Mammary epithelial cell (primary cell): ENCODE measurements at regions of chr15 and their contacts with region 1.

Region 1: DNA sequence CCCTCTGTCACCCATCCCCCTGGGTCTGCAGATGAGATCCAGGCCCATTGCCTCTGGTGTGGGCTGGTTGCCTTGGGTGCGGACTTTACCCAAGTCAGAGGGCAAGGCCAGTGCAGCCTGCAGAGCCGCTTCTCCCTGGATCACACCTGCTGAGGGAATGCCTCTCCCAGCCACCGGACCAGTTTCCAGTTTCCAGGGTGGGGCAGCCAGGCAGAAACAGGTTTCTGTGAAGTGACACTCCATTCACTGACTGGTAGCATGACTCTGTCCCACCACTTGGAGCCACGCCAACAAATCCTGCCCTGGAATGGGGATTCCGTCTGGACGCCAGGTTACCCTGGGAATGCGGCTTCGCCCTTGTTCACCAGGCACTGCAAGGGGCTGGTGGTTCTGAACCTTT is 30.0 kb downstream of the PAQR5 start:
- DNase-seq: no peak
- H3K4me3 ChIP-seq: no peak overlapping the region
- H3K27ac ChIP-seq: no peak overlapping the region
- H3K4me1 ChIP-seq: no peaks in the 10 kb centered on the region
- H3K27me3 ChIP-seq: no peaks in the 10 kb centered on the region
- CTCF ChIP-seq: no peak

Region 2: GRCh38 chr15:69213786-69214185 is 115.0 kb before region 1 on chr15:
- CTCF ChIA-PET with region 1: no interaction called
- dilution Hi-C with region 1: no loop called
- in situ Hi-C with region 1: no loop called
- intact Hi-C with region 1: no loop called
- DNase-seq: no peak
- H3K4me3 ChIP-seq: no peak overlapping the region
- H3K27ac ChIP-seq: no peak overlapping the region
- H3K4me1 ChIP-seq: no peaks in the 10 kb centered on the region
- H3K27me3 ChIP-seq: no peaks in the 10 kb centered on the region
- CTCF ChIP-seq: peak in 1 of 2 donors; percentile 15

Region 3: GRCh38 chr15:69298697-69299441 is 29.9 kb before region 1 on chr15 and contains the start of gene PAQR5:
- CTCF ChIA-PET with region 1: no interaction called
- dilution Hi-C with region 1: no loop called
- in situ Hi-C with region 1: no loop called
- intact Hi-C with region 1: no loop called
- DNase-seq: no peak
- H3K4me3 ChIP-seq: peak within 1 kb of the TSS; percentile 42 to 66 (median 53)
- H3K27ac ChIP-seq: no peak within 1 kb of the TSS
- H3K4me1 ChIP-seq: peaks cover 14% of the 10 kb centered on the region
- H3K27me3 ChIP-seq: no peaks in the 10 kb centered on the region
- CTCF ChIP-seq: no peak
- total RNA-seq, gene PAQR5: 0.66 to 1.5 TPM

Region 4: GRCh38 chr15:69359729-69360128 is 31.0 kb after region 1 on chr15:
- CTCF ChIA-PET with region 1: no interaction called
- dilution Hi-C with region 1: loop called (anchors 5 kb)
- in situ Hi-C with region 1: no loop called
- intact Hi-C with region 1: no loop called
- DNase-seq: no peak
- H3K4me3 ChIP-seq: no peak overlapping the region
- H3K27ac ChIP-seq: no peak overlapping the region
- H3K4me1 ChIP-seq: no peaks in the 10 kb centered on the region
- H3K27me3 ChIP-seq: no peaks in the 10 kb centered on the region
- CTCF ChIP-seq: no peak